ENCODE measurements at regions of chr14 and their contacts with region 1.

Region 1: DNA sequence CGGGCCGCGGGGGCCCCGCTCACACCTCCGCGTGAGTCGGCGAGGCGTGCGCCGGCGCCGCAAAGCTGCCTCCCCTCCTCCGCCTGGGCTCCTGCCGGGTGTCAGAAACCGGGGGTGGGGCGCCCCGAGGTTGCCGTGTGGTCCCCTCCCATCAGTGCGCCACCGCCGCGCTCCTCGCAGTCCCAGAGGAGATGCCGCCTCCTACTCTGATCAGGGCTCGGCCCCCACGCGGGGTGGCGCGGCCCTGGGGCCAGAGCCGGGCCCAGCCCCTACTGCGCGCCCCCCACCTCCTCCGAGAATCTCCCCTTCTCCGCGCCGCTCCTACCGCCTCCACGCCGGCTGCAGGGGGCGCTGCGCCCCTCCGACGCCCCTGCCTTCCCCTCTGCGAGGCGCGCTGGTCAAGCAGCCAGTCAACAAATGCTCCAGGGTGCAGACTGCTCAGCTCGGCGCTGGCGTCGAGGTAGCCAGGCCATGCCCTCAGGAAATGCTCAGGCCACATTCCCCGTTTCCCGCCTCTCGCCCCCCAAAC is 467 bp upstream of the JAG2 start:
- DNase-seq: peak; percentile 67 to 68
- ATAC-seq: peak; percentile 24 to 70
- H3K4me3 ChIP-seq: peak overlapping the region; percentile 59
- H3K27ac ChIP-seq: peak overlapping the region; percentile 72 to 90; a peak in 5 of 6 replicates
- H3K4me1 ChIP-seq: peaks cover 33% of the 10 kb centered on the region
- CTCF ChIP-seq: peak; percentile 52
- EP300 ChIP-seq: no peak
- POLR2A ChIP-seq: no peak
- RAD21 ChIP-seq: peak; percentile 29 to 32; a peak in 2 of 5 replicates

Region 2: GRCh38 chr14:105093431-105094192 is 75.4 kb before region 1 on chr14:
- CTCF ChIA-PET with region 1: interaction called, 132 read pairs
- POLR2A ChIA-PET with region 1: interaction called, 11 read pairs
- DNase-seq: peak; percentile 85 to 93
- ATAC-seq: peak; percentile 12 to 59
- H3K4me3 ChIP-seq: peak overlapping the region; percentile 92
- H3K27ac ChIP-seq: peak overlapping the region; percentile 98 to 100
- H3K4me1 ChIP-seq: peaks cover 49% of the 10 kb centered on the region
- CTCF ChIP-seq: peak; percentile 67
- EP300 ChIP-seq: no peak
- POLR2A ChIP-seq: peak; percentile 59
- RAD21 ChIP-seq: peak; percentile 46 to 60

Region 3: DNA sequence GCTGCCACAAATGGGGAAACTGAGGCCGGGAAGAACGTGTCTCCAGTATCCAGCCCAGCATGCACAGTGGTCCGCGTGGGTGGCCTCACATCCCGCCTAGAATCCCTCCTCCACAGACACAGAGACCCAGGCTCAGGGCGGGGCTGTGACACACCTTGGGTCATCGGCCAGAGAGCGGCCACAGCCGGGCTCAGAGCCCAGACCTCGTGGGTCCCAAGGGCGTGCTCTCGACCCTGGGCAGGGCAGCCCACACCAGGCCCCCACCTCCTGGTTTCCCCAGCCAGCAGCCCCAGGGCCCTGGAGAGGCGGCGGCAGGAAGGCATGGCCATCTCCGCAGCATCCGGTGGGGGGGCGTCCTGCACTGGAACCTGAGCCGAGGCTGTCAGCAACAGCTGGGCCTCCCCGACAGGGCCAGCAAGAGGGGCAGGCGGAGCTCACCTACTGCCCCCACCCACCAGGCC is 15.7 kb before region 1 on chr14:
- CTCF ChIA-PET with region 1: interaction called, 15 read pairs
- POLR2A ChIA-PET with region 1: no interaction called
- DNase-seq: no peak
- ATAC-seq: no peak; a peak in 1 of 6 replicates
- H3K4me3 ChIP-seq: no peak overlapping the region
- H3K27ac ChIP-seq: no peak overlapping the region
- H3K4me1 ChIP-seq: no peaks in the 10 kb centered on the region
- CTCF ChIP-seq: no peak
- EP300 ChIP-seq: no peak
- POLR2A ChIP-seq: no peak
- RAD21 ChIP-seq: no peak

Region 4: GRCh38 chr14:105180592-105181548 is 11.8 kb after region 1 on chr14 and contains the start of gene NUDT14:
- CTCF ChIA-PET with region 1: interaction called, 45 read pairs
- POLR2A ChIA-PET with region 1: interaction called, 7 read pairs
- DNase-seq: peak; percentile 69 to 85
- ATAC-seq: peak; percentile 60 to 62
- H3K4me3 ChIP-seq: peak within 1 kb of the TSS; percentile 54
- H3K27ac ChIP-seq: peak within 1 kb of the TSS; percentile 84 to 96
- H3K4me1 ChIP-seq: peaks cover 18% of the 10 kb centered on the region; the same call in 2 of the 3 replicates
- CTCF ChIP-seq: no peak
- EP300 ChIP-seq: no peak
- POLR2A ChIP-seq: peak; percentile 45
- RAD21 ChIP-seq: no peak
- polyA plus RNA-seq, gene NUDT14: 11.3 and 12.6 TPM in 2 replicates

Region 5: GRCh38 chr14:105305345-105305744 is 136.3 kb after region 1 on chr14:
- CTCF ChIA-PET with region 1: no interaction called
- POLR2A ChIA-PET with region 1: no interaction called
- DNase-seq: no peak
- ATAC-seq: no peak
- H3K4me3 ChIP-seq: no peak overlapping the region
- H3K27ac ChIP-seq: no peak overlapping the region
- H3K4me1 ChIP-seq: 0 out of 3 replicates have a peak, but pooled peaks cover 3% of the 10 kb centered on the region
- CTCF ChIP-seq: no peak
- EP300 ChIP-seq: no peak
- POLR2A ChIP-seq: no peak
- RAD21 ChIP-seq: no peak

Measured in A549 (cell line).